ENCODE measurements at regions of chr4 and their contacts with region 1.

Region 1: DNA sequence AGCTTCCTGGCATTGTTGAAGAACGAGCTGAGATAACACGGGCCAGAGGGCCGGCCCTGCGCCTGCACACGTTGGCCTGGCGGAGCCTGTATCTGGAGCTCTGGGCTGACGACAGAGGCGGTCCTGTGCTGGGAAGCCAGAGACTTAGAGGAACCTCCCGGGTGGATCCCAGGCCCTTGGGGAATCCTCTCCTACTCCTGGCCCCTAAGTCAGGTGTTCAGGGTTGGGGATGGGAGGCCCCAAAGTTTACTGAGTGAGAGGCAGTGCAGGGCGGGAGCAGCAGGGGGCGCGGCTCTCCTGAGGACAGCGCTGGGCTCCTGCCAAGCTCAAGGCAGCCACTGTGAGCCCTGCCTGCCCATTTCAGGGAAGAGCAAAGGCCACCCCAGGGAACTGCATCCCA is 2.5 kb upstream of the HTRA3 start:
- DNase-seq: peak; percentile 74
- ATAC-seq: peak; percentile 85
- H3K4me3 Mint-ChIP-seq: no peak overlapping the region
- H3K27ac Mint-ChIP-seq: no peak overlapping the region
- H3K4me1 Mint-ChIP-seq: no peaks in the 10 kb centered on the region
- H3K27me3 Mint-ChIP-seq: peaks cover 28% of the 10 kb centered on the region

Region 2: GRCh38 chr4:8248091-8248490 is 19.0 kb before region 1 on chr4:
- CTCF ChIA-PET with region 1: no interaction called
- POLR2A ChIA-PET with region 1: no interaction called
- intact Hi-C with region 1: no loop called
- DNase-seq: no peak
- ATAC-seq: no peak
- H3K4me3 Mint-ChIP-seq: no peak overlapping the region
- H3K27ac Mint-ChIP-seq: no peak overlapping the region
- H3K4me1 Mint-ChIP-seq: no peaks in the 10 kb centered on the region
- H3K27me3 Mint-ChIP-seq: no peaks in the 10 kb centered on the region

Region 3: DNA sequence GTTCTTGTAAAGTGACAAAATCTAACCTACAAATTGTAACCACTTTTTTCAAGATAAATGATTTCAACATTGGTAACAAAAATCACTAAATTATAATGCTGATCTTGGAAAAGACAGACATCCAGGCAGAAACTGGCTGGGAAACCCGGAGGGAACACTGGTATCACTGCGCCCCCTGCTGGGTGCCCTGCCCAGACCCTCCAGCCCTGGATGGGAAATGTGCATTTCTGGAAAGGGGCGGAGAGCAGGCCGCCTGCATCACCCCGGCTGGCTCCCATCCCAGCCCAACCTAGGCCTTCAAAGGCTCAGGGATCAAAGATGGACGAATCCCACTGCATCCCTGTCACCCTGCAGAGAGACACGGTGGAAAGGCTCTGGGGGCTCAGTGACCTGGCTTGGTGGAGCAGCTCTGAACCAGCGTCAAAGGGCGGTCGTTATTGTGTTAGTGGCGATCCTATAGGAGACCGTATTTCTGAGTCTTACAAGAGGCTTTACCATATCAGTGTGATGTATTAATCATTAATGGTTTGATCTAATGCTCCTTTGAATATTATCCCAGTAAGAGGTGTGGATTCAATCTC is 136.2 kb after region 1 on chr4:
- CTCF ChIA-PET with region 1: interaction called, 4 read pairs
- POLR2A ChIA-PET with region 1: no interaction called
- intact Hi-C with region 1: loop called in 1 of 2 experiments (anchors 1 kb)
- DNase-seq: peak; percentile 75
- ATAC-seq: peak; percentile 74
- H3K4me3 Mint-ChIP-seq: no peak overlapping the region
- H3K27ac Mint-ChIP-seq: no peak overlapping the region
- H3K4me1 Mint-ChIP-seq: no peaks in the 10 kb centered on the region
- H3K27me3 Mint-ChIP-seq: no peaks in the 10 kb centered on the region

Region 4: DNA sequence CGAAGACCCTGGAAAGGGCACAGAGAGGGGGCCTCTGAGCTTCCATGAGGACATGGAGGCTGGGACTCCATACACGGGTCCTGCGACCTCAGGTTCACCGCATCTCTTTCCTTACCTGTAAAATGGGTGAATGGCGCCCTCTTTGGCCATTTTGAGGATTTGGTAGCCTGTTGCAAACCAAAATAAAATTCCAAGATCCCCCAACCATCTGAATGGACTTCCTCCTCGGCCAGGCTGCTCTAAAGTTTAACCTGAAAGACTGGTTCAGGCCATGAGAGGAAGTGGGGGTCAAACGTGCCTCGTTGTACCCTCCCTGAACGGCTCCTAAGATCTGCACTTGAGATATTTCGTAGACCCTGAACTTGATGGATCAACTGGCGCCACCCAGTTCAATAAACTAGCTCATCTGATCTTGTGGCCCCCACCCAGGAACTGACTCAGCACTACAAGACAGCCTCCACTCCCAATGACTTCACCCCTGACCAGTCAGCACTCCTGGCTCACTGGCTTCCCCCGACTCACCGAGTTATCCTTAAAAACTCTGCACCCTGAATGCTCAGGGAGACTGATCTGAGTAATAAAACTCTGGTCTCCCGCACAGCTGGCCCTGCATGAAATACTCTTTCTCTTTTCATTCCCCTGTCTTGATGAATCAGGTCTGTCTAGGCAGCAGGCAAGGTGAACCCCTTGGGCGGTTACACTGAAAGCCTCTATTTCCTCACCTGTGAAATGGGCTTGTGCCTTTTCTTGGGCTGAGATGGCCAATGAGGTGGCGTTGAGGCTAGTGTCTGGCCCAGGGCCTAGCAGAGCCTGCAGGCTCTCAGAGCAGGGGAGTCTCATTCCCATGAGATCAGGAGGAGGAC is 280.3 kb after region 1 on chr4:
- CTCF ChIA-PET with region 1: no interaction called
- POLR2A ChIA-PET with region 1: no interaction called
- intact Hi-C with region 1: loop called in 1 of 2 experiments (anchors 1 kb)
- DNase-seq: peak; percentile 42
- ATAC-seq: peak; percentile 47
- H3K4me3 Mint-ChIP-seq: no peak overlapping the region
- H3K27ac Mint-ChIP-seq: no peak overlapping the region
- H3K4me1 Mint-ChIP-seq: no peaks in the 10 kb centered on the region
- H3K27me3 Mint-ChIP-seq: no peaks in the 10 kb centered on the region

Region 5: DNA sequence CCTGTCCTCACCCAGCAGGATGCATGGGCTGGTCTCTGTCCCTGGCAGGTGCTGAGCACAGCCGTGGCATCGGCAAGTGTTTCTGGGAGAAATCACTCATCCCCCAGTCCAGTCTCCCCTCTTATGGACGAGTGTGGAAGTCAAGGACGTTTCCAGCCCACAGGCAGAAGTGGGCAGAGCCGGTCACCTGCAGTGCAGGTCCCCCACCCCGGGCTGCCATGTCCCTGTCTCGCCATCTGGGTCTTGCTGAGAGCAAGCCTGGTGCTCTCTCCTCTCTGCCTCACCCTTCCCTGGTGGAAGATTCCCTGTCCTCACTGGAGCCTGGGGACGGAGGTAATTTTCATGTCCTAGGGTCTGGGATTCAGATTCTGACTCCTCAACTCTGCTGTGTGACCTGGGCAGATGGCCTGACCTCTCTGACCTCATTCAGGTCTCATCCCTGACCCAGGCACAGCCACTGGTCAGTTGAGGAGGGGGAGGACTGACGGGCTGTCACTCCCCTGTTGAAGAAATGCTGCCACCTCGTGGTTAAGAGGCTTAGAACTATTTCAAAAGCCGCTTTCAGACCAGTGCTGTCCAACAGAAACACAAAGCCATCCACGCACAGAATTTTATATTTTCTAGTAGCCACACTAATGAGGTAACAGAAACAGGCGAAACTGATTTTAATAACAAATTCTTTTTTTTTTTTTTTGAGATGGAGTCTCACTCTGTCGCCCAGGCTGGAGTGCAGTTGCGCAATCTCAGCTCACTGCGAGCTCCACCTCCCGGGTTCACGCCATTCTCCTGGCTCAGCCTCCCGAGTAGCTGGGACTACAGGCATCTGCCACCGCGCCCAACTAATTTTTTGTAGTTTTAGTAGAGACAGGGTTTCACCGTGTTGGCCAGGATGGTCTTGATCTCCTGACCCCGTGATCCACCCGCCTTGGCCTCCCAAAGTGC is 327.3 kb after region 1 on chr4:
- CTCF ChIA-PET with region 1: no interaction called
- POLR2A ChIA-PET with region 1: no interaction called
- intact Hi-C with region 1: loop called in 1 of 2 experiments (anchors 1 kb)
- DNase-seq: peak; percentile 44
- ATAC-seq: no peak
- H3K4me3 Mint-ChIP-seq: no peak overlapping the region
- H3K27ac Mint-ChIP-seq: no peak overlapping the region
- H3K4me1 Mint-ChIP-seq: no peaks in the 10 kb centered on the region
- H3K27me3 Mint-ChIP-seq: peaks cover 19% of the 10 kb centered on the region